PC-9 (cell line): ENCODE measurements at regions of chr19 and their contacts with region 1.

Region 1: DNA sequence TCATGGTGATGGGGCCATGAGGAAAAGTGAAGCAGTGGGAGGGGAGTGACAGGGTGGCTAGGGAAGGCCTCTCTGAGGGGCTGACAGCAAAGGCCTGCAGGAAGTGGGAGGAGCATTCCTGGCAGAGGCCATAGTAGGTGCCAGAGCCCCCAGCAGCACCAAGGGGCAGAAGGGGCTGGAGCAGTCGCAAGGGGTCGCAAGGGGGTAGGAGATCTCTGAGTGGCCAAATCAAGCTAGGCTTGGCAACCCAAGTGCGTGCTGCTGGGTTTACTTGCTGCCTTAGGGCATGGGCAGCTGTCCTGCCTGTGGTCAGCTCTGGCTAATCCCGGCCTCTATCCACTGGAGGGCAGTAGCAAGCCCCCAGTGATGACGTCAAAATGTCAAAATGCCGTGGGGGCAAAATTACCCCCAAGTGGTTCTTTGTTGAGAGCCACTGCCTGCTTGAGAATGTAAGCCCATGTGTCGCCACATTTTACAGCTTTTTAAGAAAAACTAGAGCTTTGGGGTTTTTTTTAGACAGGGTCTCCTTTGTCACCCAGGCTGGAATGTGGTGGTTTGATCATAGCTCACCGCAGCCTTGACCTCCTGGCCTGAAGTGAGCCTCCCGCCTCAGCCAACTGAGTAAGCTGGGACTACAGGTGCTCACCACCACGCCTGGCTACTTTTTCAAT is 11.8 kb downstream of the CCDC97 start:
- DNase-seq: peak in 1 of 2 experiments; percentile 57
- H3K4me3 ChIP-seq: no peak overlapping the region
- H3K27ac ChIP-seq: no peak overlapping the region
- H3K4me1 ChIP-seq: peaks cover under 1% of the 10 kb centered on the region; the same call in 1 of the 2 replicates
- H3K27me3 ChIP-seq: no peaks in the 10 kb centered on the region
- CTCF ChIP-seq: peak; percentile 67

Region 2: DNA sequence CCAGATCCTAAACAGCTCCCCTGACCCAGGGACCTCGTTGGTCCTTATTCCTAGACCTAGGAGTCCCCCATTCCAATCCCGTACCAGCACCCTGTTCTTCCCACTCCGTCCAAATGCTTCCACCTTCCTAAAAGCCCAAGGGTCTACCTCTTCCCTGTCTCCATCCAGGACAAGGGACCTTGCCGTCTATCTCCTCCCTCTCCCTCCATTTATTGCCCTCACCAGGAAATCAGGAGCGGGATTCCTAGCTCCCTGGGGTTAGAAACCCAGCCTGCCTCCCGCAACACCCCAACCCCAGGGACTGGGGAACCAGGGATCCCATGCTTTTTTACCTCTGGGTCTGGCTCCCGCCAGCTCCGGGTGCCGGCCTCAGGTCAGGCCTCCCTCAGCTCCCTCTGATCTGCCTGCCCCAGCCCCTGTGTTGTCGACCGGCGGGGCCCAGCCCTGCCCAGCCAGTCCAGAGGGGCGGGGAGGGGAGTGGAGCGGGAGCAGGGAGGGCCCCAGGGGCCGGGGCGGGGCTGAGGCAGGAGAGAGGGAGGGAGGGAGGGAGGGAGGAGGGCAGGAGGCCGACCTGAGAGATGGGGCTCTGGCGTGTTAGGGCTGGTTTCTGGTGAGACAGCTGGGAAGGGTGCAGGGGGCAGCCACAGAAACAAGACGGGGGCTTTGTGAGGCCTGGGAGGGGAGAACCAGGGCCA is 105.4 kb after region 1 on chr19 and contains the start of gene B3GNT8:
- CTCF ChIA-PET with region 1: no interaction called
- POLR2A ChIA-PET with region 1: no interaction called
- intact Hi-C with region 1: loop called (anchors 2 kb)
- DNase-seq: peak in 1 of 2 experiments; percentile 49
- H3K4me3 ChIP-seq: no peak within 1 kb of the TSS
- H3K27ac ChIP-seq: no peak within 1 kb of the TSS
- H3K4me1 ChIP-seq: no peaks in the 10 kb centered on the region
- H3K27me3 ChIP-seq: no peaks in the 10 kb centered on the region
- CTCF ChIP-seq: no peak
- total RNA-seq, gene B3GNT8: 0.20 TPM in 1 of 2 replicates, not detected in the other